ENCODE measurements at regions of chr3 and their contacts with region 1.

Region 1: DNA sequence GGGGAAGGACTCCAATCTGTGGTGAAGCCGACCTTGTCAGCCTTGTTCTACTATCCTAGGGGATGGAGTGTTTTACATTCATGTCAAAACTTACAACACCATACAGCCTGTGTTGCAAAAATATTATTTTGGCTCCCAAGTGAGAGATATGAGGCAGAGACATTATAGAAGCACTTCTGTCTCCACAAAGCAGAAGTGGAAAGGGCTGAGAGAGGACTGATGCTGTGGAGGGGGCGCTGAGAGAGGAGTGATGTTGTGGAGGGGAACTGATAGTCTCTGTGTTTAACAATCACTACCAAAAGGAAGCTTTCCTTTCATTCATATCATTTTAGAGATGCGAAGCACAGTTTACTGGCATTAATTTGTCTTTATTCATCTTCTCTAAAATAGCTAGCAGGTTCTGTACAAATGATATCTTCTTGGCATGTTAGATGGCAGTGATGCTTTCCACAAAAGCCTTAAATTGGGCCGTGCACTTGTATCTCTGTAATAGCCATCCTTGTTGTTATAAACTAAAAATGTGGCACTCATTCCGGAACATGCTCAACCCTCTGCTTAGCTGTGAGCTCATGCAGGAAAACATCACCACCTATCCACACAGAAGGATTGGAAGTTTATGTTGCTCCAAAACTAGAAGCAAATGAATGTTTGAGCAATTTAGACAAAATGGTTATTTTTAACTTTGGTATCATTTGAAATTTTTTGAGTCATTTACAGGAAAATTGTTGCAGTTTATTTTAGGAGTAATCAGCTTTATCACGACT is 134.6 kb upstream of the TP63 start:
- DNase-seq: no peak
- H3K4me3 ChIP-seq: no peak overlapping the region
- H3K27ac ChIP-seq: no peak overlapping the region
- H3K4me1 ChIP-seq: peaks cover under 1% of the 10 kb centered on the region
- H3K27me3 ChIP-seq: no peaks in the 10 kb centered on the region
- CTCF ChIP-seq: no peak

Region 2: GRCh38 chr3:189570916-189571315 is 74.4 kb after region 1 on chr3:
- CTCF ChIA-PET with region 1: no interaction called
- dilution Hi-C with region 1: loop called (anchors 5 kb)
- in situ Hi-C with region 1: no loop called
- intact Hi-C with region 1: no loop called
- DNase-seq: no peak
- H3K4me3 ChIP-seq: no peak overlapping the region
- H3K27ac ChIP-seq: no peak overlapping the region
- H3K4me1 ChIP-seq: peaks cover 15% of the 10 kb centered on the region
- H3K27me3 ChIP-seq: no peaks in the 10 kb centered on the region
- CTCF ChIP-seq: no peak